ENCODE measurements at regions of chr10 and their contacts with region 1.

Region 1: DNA sequence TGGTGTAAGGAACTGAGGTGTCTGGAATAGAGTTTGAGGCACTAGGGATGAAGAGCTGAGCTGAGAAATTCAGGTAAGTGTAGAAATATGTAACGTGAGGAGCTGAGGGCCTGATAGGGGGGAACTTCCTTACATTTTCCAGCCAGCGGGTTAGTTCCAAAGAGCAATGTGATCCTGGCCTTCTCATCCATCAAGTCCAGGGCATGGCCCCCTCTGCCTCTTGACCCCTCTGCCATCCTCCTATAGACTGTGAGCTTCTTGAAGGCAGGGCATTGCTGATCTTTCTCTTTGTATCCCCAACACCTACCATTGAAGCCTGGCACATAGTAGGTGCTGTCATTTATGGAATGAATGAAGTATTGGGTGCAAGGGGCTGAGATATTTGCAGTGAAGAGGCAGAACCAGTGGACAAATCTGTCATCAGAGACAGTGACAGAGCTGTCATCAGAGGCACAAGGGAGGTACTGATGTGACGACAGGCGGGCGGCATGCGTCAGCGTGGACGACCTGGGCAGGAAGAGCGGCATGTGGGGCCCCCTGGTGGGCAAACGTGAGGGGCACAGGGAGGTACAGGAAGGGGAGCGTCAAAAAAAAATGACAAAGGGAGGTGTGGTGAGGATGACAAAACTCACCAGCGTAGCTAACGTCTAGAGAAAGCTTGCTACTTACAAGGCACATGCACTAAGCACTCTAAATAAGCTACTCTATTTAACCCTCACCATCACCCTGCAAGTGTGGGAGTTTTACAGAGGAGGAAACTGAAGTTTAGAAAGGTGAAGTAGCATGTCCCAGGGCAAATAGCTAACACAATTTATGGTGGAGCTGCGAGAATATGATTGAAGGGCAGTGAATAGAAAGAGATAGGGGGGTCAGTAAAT is 5.2 kb upstream of the CAMK2G start:
- DNase-seq: peak; percentile 42
- H3K4me3 ChIP-seq: no peak overlapping the region
- CTCF ChIP-seq: peak; percentile 89

Region 2: GRCh38 chr10:73810735-73811465 is 68.6 kb before region 1 on chr10:
- in situ Hi-C with region 1: no loop called
- DNase-seq: no peak
- H3K4me3 ChIP-seq: peak overlapping the region; percentile 79
- CTCF ChIP-seq: no peak

Region 3: DNA sequence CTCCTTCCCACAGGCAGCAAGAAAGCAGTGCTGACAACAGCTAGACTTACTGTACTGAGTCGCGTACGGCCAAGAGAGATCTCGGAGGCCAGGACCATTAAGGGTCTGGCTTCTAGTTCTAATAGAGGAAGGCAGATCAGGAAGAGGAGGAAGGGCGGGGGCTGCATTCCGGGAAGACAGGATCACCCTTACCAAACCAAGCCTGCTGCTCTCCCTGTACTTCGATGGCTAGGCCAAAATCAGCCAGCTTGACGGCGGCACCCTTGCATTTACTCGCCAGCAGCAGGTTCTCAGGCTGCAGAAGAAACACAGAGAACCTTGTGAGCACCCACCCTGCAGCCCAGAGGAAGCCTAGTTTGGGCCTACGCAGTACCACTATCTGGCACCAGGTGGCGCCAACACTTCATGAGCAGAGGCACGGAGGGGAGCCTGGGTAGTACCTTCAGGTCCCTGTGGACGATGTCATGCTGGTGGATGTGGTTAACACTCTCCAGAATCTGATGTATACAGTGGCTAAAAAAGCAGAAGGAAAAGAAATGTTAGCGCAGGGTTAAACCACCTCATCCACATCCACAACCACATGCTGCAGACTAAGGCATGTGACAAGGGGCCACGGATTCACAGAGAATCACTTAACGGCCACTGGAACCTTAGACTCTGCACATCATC is 30.6 kb before region 1 on chr10:
- in situ Hi-C with region 1: loop called (anchors 5 kb)
- DNase-seq: peak; percentile 61
- H3K4me3 ChIP-seq: no peak overlapping the region
- CTCF ChIP-seq: peak; percentile 100

Region 4: DNA sequence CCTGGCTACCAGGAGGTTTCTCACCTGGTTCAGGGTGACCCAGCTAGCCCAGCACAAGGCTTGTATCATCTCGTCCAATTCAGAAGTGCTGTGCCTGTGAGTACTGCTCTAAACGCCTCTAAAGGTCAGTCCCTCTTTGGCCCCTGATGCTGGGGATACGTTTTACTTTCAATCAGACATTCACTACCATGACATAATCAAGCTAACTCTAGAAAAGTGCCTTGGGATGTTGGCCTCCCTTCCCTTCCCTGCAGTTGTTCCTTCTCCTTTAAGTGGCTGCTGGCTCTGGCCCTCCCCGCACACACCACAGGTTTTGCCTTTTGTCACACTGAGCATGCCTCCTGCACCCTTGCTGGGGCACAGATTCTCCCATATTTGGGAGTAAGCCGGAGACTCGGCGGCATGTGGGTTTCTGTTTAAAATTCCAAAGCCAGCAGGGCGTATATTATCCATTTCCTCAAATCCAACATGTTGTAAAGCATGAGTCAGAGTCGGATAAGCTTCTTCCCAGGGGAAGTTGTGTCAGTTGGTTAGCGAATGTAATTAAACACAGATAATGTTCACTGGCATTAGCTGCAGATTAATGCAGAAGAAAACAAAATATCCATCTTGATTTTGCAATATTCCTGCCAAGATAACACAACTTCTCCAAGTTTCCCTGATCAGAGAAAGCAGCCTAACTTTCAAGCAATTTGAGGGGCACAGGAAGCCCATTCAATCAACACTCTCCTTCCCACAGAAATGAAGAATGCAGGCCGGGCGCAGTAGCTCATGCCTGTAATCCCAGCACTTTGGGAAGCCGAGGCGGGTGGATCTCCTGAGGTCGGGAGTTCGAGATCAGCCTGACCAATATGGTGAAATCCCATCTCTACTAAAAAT is 86.6 kb after region 1 on chr10:
- in situ Hi-C with region 1: loop called (anchors 5 kb)
- DNase-seq: peak; percentile 99
- H3K4me3 ChIP-seq: no peak overlapping the region
- CTCF ChIP-seq: no peak

Region 5: GRCh38 chr10:74103560-74104248 is 224.2 kb after region 1 on chr10:
- in situ Hi-C with region 1: loop called (anchors 25 kb)
- DNase-seq: peak; percentile 24
- H3K4me3 ChIP-seq: no peak overlapping the region
- CTCF ChIP-seq: peak; percentile 58

Region 6: DNA sequence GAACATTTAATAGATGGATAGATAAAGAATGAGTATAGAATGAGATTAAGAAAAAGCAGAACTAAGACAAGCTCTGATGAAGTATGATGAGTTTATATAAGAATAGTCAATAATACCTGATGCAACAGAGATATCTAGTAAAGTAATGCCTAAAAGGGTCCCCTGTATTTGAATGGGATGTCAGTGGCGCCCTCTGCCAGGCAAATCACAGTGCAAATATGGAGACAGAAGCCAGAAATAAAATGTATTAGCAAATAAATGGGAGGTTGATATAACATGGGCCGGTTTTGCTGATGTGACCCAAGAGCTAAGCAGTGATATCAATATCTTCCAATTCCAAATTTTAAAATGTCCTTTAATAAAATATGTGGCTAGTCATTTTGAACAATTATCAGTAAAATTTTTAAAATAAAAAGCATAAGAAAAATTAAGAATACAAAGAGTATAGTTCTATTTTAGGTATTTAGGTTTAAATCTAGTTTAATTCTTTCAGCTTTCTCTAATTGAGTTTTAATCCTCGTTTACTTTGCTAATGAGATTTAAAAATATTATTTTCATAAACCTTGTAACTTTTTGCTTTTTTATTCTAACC is 334.1 kb after region 1 on chr10:
- in situ Hi-C with region 1: loop called (anchors 25 kb)
- DNase-seq: peak; percentile 35
- H3K4me3 ChIP-seq: no peak overlapping the region
- CTCF ChIP-seq: peak; percentile 75

Measured in astrocyte of the cerebellum (primary cell).